HEK293T (cell line): ENCODE measurements at regions of chr4 and their contacts with region 1.

Region 1: GRCh38 chr4:53821179-53821851 is 230.0 kb upstream of the LNX1 start:
- DNase-seq: no peak

Region 2: GRCh38 chr4:53777244-53777984 is 43.9 kb before region 1 on chr4:
- CTCF ChIA-PET with region 1: no interaction called
- POLR2A ChIA-PET with region 1: no interaction called
- DNase-seq: no peak

Region 3: GRCh38 chr4:53810643-53811042 is 10.7 kb before region 1 on chr4:
- CTCF ChIA-PET with region 1: no interaction called
- POLR2A ChIA-PET with region 1: no interaction called
- DNase-seq: no peak

Region 4: GRCh38 chr4:53943345-53944085 is 122.2 kb after region 1 on chr4:
- CTCF ChIA-PET with region 1: interaction called, 10 read pairs
- POLR2A ChIA-PET with region 1: no interaction called
- DNase-seq: peak; percentile 39